ENCODE measurements at regions of chr10 and their contacts with region 1.

Region 1: DNA sequence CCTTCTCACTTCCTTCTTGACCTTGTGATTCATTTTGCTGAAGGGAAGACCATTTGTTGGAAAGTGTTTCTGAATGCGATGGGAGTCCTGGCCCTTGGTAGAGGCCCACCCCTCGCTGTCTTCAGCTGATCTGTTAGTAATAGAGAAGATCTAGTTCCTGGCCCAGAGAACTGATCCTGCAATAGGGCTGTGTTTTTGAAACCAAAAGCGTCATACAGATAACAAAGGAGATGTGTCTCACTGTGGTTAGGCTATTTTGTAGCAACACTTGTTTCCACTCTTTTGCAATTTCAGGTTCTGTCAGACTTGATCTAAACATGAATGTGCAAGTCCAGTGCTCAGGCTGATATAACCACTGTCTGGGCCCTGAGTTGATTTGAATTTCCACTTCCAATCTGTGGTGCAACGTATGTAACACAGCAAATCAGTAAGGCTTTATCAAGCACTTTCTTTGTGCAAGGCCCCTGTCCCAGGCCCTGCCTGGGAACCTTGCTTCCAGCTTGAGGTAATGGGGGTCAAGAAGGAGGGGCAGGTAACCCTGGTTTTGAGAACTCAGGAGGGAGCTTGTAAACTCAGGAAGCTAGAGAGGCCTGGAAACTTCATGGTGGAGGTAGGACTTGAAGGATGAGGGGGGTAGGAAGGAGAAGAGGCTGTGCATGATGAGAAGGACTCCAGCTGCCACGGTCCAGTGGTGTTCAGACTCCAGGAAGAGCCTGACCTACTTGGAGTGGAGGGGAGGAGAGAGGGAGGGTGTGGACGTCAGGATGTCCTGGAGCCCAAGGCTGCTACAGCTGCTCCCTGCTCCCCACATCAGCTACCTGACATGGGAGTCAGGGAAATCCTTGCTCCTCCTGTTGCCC is 42.2 kb upstream of the SRGN start:
- DNase-seq: peak in 10 of 14 experiments; percentile 10 to 78 (median 22)
- ATAC-seq: peak; percentile 83
- H3K4me3 ChIP-seq: no peak overlapping the region
- H3K4me3 Mint-ChIP-seq: peak overlapping the region; percentile 69
- H3K27ac ChIP-seq: peak overlapping the region; percentile 60 to 72
- H3K27ac Mint-ChIP-seq: peak overlapping the region; percentile 93
- H3K4me1 ChIP-seq: peaks cover 52% of the 10 kb centered on the region
- H3K4me1 Mint-ChIP-seq: peaks cover 31% of the 10 kb centered on the region
- H3K27me3 ChIP-seq: no peaks in the 10 kb centered on the region
- H3K27me3 Mint-ChIP-seq: no peaks in the 10 kb centered on the region
- CTCF ChIP-seq: no peak

Region 2: GRCh38 chr10:69080226-69080625 is 34.6 kb after region 1 on chr10:
- CTCF ChIA-PET with region 1: no interaction called
- POLR2A ChIA-PET with region 1: no interaction called
- intact Hi-C with region 1: loop called in 1 of 2 experiments (anchors 5 kb)
- DNase-seq: no peak
- ATAC-seq: no peak
- H3K4me3 ChIP-seq: no peak overlapping the region
- H3K4me3 Mint-ChIP-seq: no peak overlapping the region
- H3K27ac ChIP-seq: no peak overlapping the region
- H3K27ac Mint-ChIP-seq: no peak overlapping the region
- H3K4me1 ChIP-seq: no peaks in the 10 kb centered on the region
- H3K4me1 Mint-ChIP-seq: peaks cover 2% of the 10 kb centered on the region
- H3K27me3 ChIP-seq: no peaks in the 10 kb centered on the region
- H3K27me3 Mint-ChIP-seq: no peaks in the 10 kb centered on the region
- CTCF ChIP-seq: no peak